Endothelial cell of umbilical vein (primary cell): ENCODE measurements at regions of chr4 and their contacts with region 1.

Region 1: DNA sequence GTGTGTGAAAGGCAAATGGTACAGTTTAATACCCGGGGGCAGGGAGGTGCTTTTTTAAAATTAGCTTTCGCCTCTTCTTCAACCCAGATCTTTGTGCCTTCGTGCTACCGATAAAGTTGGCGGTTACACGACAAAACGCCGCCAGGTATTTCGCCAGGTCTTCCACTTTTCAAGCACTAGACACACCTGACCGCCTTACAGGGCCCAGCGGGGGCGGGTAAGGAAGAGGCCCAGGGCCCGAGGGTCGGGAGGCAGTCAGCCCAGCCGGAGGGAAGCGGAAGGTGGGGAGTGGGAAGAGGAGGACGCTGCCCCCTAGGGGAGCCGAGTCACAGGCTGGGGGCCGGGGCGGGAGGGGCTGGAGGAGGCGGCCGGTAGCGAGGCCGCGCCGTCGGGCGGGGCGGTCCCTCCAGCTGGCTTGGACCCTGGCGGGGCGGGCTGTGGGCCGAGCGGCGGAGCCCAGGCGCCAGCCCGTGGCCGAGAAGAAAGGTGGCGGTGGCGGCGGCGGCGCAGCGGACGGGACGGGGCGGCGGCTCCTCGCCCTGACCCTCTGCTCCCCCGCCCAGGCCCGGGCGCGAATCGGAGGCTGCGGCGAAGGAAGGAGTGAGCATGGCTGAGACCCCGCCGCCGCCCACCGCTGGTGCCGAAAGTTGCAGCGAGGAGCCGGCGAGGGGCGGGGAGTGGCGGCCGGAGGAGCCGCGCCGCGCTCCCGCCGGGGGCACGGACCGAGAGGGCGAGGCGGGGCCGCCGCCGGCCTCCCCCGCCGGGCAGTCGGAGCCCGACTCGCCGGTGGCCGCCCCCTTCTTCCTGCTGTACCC is 16.2 kb downstream of the UTP3 start:
- DNase-seq: peak; percentile 81
- H3K4me3 ChIP-seq: peak overlapping the region; percentile 73 to 93 (median 89)
- H3K27ac ChIP-seq: peak overlapping the region; percentile 85
- H3K4me1 ChIP-seq: peaks cover 20% of the 10 kb centered on the region
- H3K27me3 ChIP-seq: no peaks in the 10 kb centered on the region
- CTCF ChIP-seq: peak in 1 of 2 donors; percentile 51
- POLR2A ChIP-seq: peak; percentile 27

Region 2: DNA sequence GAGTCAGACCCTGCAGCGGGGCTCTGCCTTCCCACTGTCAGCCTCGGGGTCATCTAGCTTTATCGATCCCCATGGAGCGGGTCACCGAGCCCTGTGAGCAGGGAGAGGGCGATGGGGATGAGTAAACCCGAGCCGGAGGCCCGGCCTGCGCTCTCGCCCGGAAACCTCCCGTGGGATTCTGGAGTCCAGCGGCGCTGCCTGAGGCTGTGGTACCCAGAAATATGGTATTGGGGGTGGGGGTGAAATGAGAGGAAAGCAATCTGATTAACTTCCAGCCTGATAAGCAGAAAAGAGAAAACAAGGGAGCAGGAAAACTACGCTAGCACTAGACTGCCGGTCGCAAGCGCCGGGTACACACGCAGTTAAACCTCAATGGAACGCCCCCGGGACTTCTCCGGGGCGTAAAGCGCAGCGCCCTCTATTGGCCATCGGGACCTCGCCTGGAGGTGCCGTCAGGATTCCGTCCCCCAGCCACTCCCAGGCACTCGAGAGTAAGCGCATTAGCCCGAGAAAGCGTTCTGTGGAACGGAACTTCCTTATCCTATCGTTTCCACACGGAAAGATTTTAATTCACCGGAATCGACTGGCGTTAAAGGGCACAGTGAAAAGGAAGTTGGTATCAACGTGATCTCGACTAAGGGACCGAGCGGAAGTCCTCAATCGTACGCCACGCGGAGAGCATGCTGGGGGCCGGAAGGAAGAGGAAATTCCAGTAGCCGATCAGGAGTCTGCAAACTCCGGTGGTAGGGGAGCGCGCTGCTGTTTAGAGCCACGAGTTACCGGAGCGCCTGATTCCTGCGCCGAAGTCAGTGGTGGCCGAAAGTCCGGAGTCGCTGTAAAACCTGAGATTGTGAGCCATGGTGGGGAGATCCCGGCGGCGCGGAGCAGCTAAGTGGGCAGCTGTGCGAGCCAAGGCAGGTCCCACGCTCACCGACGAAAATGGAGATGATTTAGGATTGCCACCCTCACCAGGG is 16.4 kb before region 1 on chr4 and contains the start of gene UTP3:
- CTCF ChIA-PET with region 1: interaction called, 16 read pairs
- POLR2A ChIA-PET with region 1: interaction called, 12 read pairs
- dilution Hi-C with region 1: no loop called
- intact Hi-C with region 1: loop called (anchors 1 kb)
- DNase-seq: peak; percentile 98
- H3K4me3 ChIP-seq: peak within 1 kb of the TSS; percentile 34 to 72 (median 62)
- H3K27ac ChIP-seq: peak within 1 kb of the TSS; percentile 36
- H3K4me1 ChIP-seq: peaks cover 22% of the 10 kb centered on the region
- H3K27me3 ChIP-seq: no peaks in the 10 kb centered on the region
- CTCF ChIP-seq: peak; percentile 96 to 99
- POLR2A ChIP-seq: peak; percentile 83
- total RNA-seq, gene UTP3: 32.8 and 34.7 TPM in 2 replicates

Region 3: DNA sequence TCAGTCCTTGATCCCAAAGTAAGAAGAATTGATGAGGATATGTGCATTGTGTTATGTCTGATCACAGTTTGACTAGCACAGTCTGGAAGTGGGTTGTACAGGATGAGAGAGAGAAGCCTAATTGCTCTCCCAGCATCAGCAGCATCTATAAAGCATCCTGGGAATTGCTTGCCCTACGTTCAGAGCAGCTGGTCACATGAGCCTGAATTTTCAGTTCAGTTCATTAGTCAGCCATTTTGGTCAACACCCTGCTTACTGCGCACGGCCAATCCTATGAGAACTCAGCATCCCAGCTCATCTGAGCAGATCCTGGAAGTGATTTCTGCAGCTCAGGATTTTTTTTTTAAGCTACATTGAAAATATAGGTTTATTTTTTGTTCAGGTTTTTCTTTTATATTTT is 17.2 kb after region 1 on chr4 and contains the start of gene RUFY3:
- CTCF ChIA-PET with region 1: interaction called, 12 read pairs
- POLR2A ChIA-PET with region 1: no interaction called
- dilution Hi-C with region 1: no loop called
- intact Hi-C with region 1: no loop called
- DNase-seq: no peak
- H3K4me3 ChIP-seq: no peak within 1 kb of the TSS
- H3K27ac ChIP-seq: no peak within 1 kb of the TSS
- H3K4me1 ChIP-seq: no peaks in the 10 kb centered on the region
- H3K27me3 ChIP-seq: no peaks in the 10 kb centered on the region
- CTCF ChIP-seq: no peak
- POLR2A ChIP-seq: no peak
- total RNA-seq, gene RUFY3: 42.4 and 52.8 TPM in 2 replicates

Region 4: GRCh38 chr4:70734168-70734954 is 29.8 kb after region 1 on chr4:
- CTCF ChIA-PET with region 1: interaction called, 25 read pairs
- POLR2A ChIA-PET with region 1: interaction called, 6 read pairs
- dilution Hi-C with region 1: no loop called
- intact Hi-C with region 1: loop called (anchors 1 kb)
- DNase-seq: peak; percentile 84
- H3K4me3 ChIP-seq: peak overlapping the region; percentile 33 to 82 (median 59)
- H3K27ac ChIP-seq: peak overlapping the region; percentile 66
- H3K4me1 ChIP-seq: peaks cover 17% of the 10 kb centered on the region
- H3K27me3 ChIP-seq: no peaks in the 10 kb centered on the region
- CTCF ChIP-seq: no peak
- POLR2A ChIP-seq: no peak

Region 5: GRCh38 chr4:70778888-70779422 is 74.4 kb after region 1 on chr4:
- CTCF ChIA-PET with region 1: interaction called, 4 read pairs
- POLR2A ChIA-PET with region 1: no interaction called
- dilution Hi-C with region 1: no loop called
- intact Hi-C with region 1: loop called (anchors 5 kb)
- DNase-seq: peak; percentile 90
- H3K4me3 ChIP-seq: peak overlapping the region in 1 of 3 experiments; percentile 3
- H3K27ac ChIP-seq: peak overlapping the region; percentile 63
- H3K4me1 ChIP-seq: peaks cover 13% of the 10 kb centered on the region
- H3K27me3 ChIP-seq: no peaks in the 10 kb centered on the region
- CTCF ChIP-seq: no peak
- POLR2A ChIP-seq: no peak

Region 6: GRCh38 chr4:70839589-70840093 is 135.1 kb after region 1 on chr4 and contains the start of gene GRSF1:
- CTCF ChIA-PET with region 1: interaction called, 8 read pairs
- POLR2A ChIA-PET with region 1: no interaction called
- dilution Hi-C with region 1: no loop called
- intact Hi-C with region 1: loop called (anchors 1 kb)
- DNase-seq: peak; percentile 91
- H3K4me3 ChIP-seq: peak within 1 kb of the TSS; percentile 54 to 81 (median 80)
- H3K27ac ChIP-seq: peak within 1 kb of the TSS; percentile 60
- H3K4me1 ChIP-seq: peaks cover 2% of the 10 kb centered on the region
- H3K27me3 ChIP-seq: no peaks in the 10 kb centered on the region
- CTCF ChIP-seq: no peak
- POLR2A ChIP-seq: peak; percentile 87
- total RNA-seq, gene GRSF1: 70.7 and 71.6 TPM in 2 replicates

Region 7: DNA sequence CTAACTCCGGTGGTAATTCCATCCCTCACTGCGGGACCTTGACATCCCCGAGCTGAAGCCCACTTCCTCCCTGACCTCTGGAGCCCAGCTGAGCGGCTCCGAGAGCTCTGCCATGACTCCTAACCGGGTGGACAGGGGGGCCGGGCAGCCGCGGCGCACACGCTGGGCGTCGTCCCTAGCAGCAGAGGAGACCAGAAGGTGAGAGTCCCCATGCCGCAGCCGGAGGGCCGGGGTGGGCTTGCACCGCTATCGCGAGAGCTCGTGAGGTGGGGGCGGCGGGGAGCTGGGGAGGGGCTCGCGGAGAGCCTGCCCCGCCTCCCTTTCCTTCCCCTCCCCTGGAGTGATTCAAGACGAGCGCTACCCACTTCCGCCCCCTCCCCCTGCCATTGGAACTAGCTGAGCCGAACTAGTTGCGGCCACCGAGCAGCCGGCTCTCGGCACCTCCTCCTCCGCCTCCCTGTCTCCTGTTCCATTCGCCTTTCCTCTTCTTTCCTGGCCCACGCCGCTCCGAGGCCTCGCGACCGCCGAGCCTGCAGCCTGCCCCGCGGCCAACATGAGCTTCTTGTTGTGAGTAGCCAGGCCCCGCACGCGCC is 197.5 kb after region 1 on chr4 and contains the start of gene MOB1B:
- CTCF ChIA-PET with region 1: no interaction called
- POLR2A ChIA-PET with region 1: interaction called, 3 read pairs
- dilution Hi-C with region 1: no loop called
- intact Hi-C with region 1: loop called (anchors 1 kb)
- DNase-seq: peak; percentile 88
- H3K4me3 ChIP-seq: peak within 1 kb of the TSS; percentile 64 to 99 (median 96)
- H3K27ac ChIP-seq: peak within 1 kb of the TSS; percentile 71
- H3K4me1 ChIP-seq: peaks cover 14% of the 10 kb centered on the region
- H3K27me3 ChIP-seq: no peaks in the 10 kb centered on the region
- CTCF ChIP-seq: peak in 1 of 2 donors; percentile 24
- POLR2A ChIP-seq: peak; percentile 83
- total RNA-seq, gene MOB1B: 23.9 and 25.9 TPM in 2 replicates

Region 8: DNA sequence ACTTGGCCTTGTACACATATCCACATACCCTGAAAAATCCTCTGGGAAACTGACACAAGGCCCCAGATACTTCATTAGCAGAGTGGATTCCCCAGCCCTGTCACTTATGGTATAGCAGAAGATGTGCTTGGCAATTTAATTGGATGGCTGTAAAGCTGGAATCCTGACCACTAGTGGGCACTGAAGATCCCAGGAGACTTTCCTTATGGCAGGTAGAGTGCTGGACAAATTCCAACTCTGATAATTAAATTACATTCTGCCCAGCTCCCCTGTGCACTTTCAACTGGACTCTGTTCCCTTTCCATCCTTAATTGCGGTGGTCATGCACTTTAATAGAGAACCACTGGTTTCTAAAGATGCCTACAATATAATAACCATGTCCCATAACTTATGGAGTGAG is 408.8 kb after region 1 on chr4:
- CTCF ChIA-PET with region 1: no interaction called
- POLR2A ChIA-PET with region 1: no interaction called
- dilution Hi-C with region 1: no loop called
- intact Hi-C with region 1: no loop called
- DNase-seq: no peak
- H3K4me3 ChIP-seq: no peak overlapping the region
- H3K27ac ChIP-seq: no peak overlapping the region
- H3K4me1 ChIP-seq: no peaks in the 10 kb centered on the region
- H3K27me3 ChIP-seq: no peaks in the 10 kb centered on the region
- CTCF ChIP-seq: no peak
- POLR2A ChIP-seq: no peak